Stomach (tissue), 19 donors: ENCODE measurements at regions of chr2 and their contacts with region 1.

Region 1: DNA sequence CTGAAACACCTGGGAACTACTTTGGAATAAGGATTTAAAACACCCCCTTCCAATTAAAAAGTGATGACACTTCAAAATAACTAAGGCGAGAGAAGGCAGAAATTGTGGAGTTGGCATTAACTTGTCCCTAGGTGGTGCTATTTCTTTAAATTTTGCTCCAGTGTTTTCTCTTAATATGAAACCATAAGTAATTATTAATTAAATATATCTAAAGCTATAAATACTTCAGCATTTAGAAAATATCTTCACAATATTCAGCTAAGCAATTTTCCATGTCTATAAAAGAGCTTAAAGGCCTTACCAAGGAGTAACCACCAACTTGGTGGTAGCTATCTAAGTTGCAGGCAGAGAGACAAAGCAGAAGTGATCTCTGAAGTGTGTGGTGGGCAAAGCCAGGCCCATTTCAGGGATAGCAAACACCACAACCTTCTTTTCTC is 186.8 kb upstream of the PGAP1 start:
- DNase-seq: peak in 1 of 2 donors; percentile 61
- H3K4me3 ChIP-seq: no peak overlapping the region
- H3K27ac ChIP-seq: no peak overlapping the region
- H3K4me1 ChIP-seq: peaks cover 0 to 18% (median 3%) of the 10 kb centered on the region in 4 donors
- H3K27me3 ChIP-seq: no peaks in the 10 kb centered on the region
- CTCF ChIP-seq: peak in 5 of 7 experiments; percentile 14 to 67 (median 35)
- EP300 ChIP-seq: no peak
- POLR2A ChIP-seq: no peak

Region 2: DNA sequence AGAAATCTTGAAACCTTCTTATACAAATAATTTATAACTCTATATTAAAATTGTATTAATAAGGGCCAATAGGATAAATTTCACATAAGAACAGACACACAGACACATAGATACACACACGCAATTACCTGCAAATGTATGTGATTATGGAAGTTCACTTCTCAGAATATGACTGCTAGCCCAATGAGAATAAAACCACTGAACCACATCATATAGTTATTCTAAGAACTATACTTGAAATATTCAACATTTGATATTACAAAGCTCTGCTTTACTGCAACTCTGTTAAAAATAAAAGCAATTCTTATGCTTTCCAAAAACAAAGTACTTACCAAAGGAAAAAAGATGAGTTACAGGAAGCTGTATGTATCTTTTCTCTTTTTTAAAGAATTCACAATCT is 237.9 kb before region 1 on chr2:
- intact Hi-C with region 1: no loop called
- DNase-seq: no peak
- H3K4me3 ChIP-seq: no peak overlapping the region
- H3K27ac ChIP-seq: no peak overlapping the region
- H3K4me1 ChIP-seq: no peaks in the 10 kb centered on the region
- H3K27me3 ChIP-seq: no peaks in the 10 kb centered on the region
- CTCF ChIP-seq: no peak
- EP300 ChIP-seq: no peak
- POLR2A ChIP-seq: no peak

Region 3: DNA sequence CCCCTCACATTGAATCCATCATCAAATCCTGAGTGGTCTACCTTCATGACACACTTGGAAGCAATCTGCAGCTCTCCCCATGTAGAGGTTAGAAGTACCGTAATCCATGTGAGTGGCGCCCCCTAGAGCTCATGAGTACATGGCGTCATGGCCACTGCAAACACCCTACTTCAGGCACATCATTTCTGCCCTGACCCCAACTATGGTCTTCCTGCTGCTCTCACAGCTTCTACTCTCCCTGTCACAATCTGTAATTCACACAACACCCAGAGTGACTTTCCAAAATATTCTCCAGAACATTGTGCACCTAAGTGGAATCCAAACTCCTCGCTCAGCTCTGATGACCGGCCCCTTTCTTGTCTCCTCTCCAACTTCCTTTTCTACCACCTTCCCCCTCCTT is 55.4 kb after region 1 on chr2:
- intact Hi-C with region 1: loop called (anchors 10 kb)
- DNase-seq: peak; percentile 75 to 84
- H3K4me3 ChIP-seq: no peak overlapping the region
- H3K27ac ChIP-seq: no peak overlapping the region
- H3K4me1 ChIP-seq: peaks cover 5 to 31% (median 11%) of the 10 kb centered on the region in 4 donors
- H3K27me3 ChIP-seq: no peaks in the 10 kb centered on the region
- CTCF ChIP-seq: peak in 5 of 7 experiments; percentile 23 to 66 (median 49)
- EP300 ChIP-seq: no peak
- POLR2A ChIP-seq: no peak

Region 4: GRCh38 chr2:197356136-197356535 is 242.8 kb after region 1 on chr2:
- intact Hi-C with region 1: no loop called
- DNase-seq: no peak
- H3K4me3 ChIP-seq: no peak overlapping the region
- H3K27ac ChIP-seq: no peak overlapping the region
- H3K4me1 ChIP-seq: no peaks in the 10 kb centered on the region
- H3K27me3 ChIP-seq: no peaks in the 10 kb centered on the region
- CTCF ChIP-seq: no peak
- EP300 ChIP-seq: no peak
- POLR2A ChIP-seq: no peak

Region 5: GRCh38 chr2:197378494-197379307 is 265.4 kb after region 1 on chr2:
- intact Hi-C with region 1: loop called (anchors 5 kb)
- DNase-seq: peak; percentile 51 to 78
- H3K4me3 ChIP-seq: no peak overlapping the region
- H3K27ac ChIP-seq: no peak overlapping the region
- H3K4me1 ChIP-seq: peaks cover 0 to 7% (median 3%) of the 10 kb centered on the region in 4 donors
- H3K27me3 ChIP-seq: no peaks in the 10 kb centered on the region
- CTCF ChIP-seq: peak in 5 of 7 experiments; percentile 47 to 80 (median 69)
- EP300 ChIP-seq: no peak
- POLR2A ChIP-seq: no peak